Posterior vena cava (tissue), 2 donors: ENCODE measurements at regions of chr19 and their contacts with region 1.

Region 1: GRCh38 chr19:13099073-13099999 is 3.3 kb downstream of the LYL1 start:
- DNase-seq: peak; percentile 94

Region 2: GRCh38 chr19:11780431-11781020 is 1318.8 kb before region 1 on chr19:
- intact Hi-C with region 1: no loop called
- DNase-seq: no peak

Region 3: DNA sequence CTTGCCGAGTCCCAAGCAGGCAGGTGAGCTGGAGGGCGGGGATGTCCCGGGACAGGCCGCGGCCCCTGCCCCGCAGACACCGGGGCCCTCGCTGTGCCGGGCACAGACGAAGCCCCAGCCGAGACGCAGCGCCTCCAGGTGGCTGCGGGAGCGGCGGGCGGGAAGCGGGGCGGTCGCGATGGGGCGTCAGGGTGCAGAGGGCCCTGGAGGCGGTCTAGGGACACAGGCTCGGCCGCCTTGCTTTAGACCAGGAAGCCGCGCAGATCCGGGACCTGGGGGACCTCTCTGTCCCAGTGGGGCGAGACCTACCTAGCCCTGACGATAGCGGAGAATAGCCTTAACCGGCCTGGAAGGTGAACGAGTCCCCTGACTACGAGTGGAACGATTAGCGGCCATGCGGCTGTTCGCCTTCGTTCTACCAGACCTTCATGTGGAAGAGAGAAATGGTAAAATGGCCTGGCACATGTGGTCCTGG is 543.8 kb before region 1 on chr19:
- intact Hi-C with region 1: loop called in 1 of 2 experiments (anchors 5 kb)
- DNase-seq: no peak

Region 4: DNA sequence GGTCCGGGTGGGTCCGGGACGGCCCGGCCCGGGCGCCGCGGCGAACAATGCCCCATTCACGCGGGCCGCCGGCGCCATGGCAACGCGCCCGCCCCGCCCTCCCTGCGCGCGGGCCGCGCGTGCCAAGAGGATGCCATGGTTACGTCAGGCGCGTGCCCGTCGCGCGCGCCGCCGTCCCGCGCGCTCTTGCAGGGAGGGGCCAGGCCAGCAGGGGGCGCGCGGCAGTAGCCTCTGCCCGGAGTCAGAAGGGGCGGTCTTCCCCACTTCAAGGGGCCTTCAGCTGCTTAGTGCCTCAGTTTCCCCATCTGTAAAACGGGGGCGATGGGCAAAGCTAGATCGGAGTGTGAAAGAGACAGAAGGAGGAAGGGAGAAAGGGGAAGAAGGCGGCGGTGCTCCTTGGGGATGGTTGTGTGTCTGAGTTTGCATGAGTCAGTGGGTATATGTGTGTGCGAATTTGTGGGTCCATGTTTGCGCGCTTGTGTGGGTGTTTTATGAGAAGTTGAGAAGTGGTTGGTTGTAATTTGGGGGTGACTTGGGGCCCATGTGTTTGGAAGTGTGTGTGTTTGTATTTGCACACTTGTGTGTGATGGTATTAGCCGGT is 115.7 kb before region 1 on chr19:
- intact Hi-C with region 1: loop called (anchors 2 to 5 kb)
- DNase-seq: peak; percentile 93